Prostate gland (tissue), 2 donors: ENCODE measurements at regions of chr3 and their contacts with region 1.

Region 1: DNA sequence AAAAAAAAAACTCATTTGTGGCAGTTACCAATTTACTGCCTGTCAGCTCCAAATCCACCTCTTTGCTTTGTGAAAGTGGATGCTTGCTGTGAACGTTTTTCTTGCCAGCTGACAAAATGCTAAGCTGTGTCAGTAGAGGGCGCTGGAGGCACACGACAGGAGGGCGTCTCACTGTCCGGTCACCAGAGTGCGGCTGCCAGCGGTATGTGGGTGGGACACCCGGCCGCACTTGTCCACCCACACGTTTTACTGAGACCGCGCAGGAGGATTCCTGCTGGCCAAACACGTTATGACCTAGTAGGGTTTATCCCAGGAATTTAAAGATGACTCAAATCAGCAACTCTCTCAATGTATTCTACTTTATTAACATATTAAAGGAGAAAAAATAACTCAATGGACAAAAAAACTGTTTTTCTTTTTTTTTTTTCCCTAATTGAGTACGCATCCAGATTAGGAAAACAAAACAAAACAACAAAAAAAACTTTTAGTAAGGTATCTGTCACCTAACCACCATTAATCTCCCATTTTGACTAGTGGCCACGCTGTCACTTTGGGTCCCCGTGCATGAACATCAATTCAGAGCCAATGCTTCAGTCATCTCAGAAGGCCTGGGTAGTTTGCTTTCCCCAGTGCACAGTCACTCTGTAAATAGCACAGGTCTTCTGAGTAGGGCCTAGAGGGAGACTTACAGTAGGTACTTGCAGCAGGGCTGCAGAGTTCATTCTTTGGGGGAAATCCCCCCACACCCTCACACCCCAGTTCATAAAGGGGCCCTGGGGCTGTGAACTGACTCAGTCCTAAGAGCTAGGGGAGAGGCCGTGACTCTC is 43.8 kb upstream of the RPL35A start:
- DNase-seq: peak; percentile 78
- H3K4me3 ChIP-seq: no peak overlapping the region
- H3K27ac ChIP-seq: no peak overlapping the region
- H3K4me1 ChIP-seq: no peaks in the 10 kb centered on the region
- H3K27me3 ChIP-seq: no peaks in the 10 kb centered on the region
- CTCF ChIP-seq: peak; percentile 71 to 88 (median 80)
- POLR2A ChIP-seq: no peak

Region 2: GRCh38 chr3:197516517-197516889 is 389.7 kb before region 1 on chr3:
- intact Hi-C with region 1: no loop called
- DNase-seq: no peak
- H3K4me3 ChIP-seq: no peak overlapping the region
- H3K27ac ChIP-seq: no peak overlapping the region
- H3K4me1 ChIP-seq: no peaks in the 10 kb centered on the region
- H3K27me3 ChIP-seq: no peaks in the 10 kb centered on the region
- CTCF ChIP-seq: no peak
- POLR2A ChIP-seq: no peak

Region 3: GRCh38 chr3:197942956-197943556 is 36.8 kb after region 1 on chr3:
- intact Hi-C with region 1: loop called (anchors 1 kb)
- DNase-seq: no peak
- H3K4me3 ChIP-seq: no peak overlapping the region
- H3K27ac ChIP-seq: no peak overlapping the region
- H3K4me1 ChIP-seq: no peaks in the 10 kb centered on the region
- H3K27me3 ChIP-seq: no peaks in the 10 kb centered on the region
- CTCF ChIP-seq: peak in 3 of 4 experiments; percentile 55 to 59 (median 58)
- POLR2A ChIP-seq: no peak